Tibial artery (tissue), 4 donors: ENCODE measurements at regions of chr16 and their contacts with region 1.

Region 1: GRCh38 chr16:50024684-50025536 is at the start of gene CNEP1R1:
- DNase-seq: peak; percentile 93 to 97
- H3K4me3 ChIP-seq: peak within 1 kb of the TSS; percentile 88 to 93
- H3K27ac ChIP-seq: peak within 1 kb of the TSS; percentile 81 to 83
- H3K4me1 ChIP-seq: peaks cover 0 to 23% (median 10%) of the 10 kb centered on the region in 4 donors
- H3K27me3 ChIP-seq: no peaks in the 10 kb centered on the region
- CTCF ChIP-seq: peak; percentile 100

Region 2: GRCh38 chr16:50152807-50153452 is 128.0 kb after region 1 on chr16 and contains the start of gene TENT4B:
- intact Hi-C with region 1: loop called (anchors 10 kb)
- DNase-seq: peak; percentile 79 to 91
- H3K4me3 ChIP-seq: peak within 1 kb of the TSS; percentile 74 to 93
- H3K27ac ChIP-seq: peak within 1 kb of the TSS; percentile 90 to 94
- H3K4me1 ChIP-seq: peaks cover 0 to 33% (median 24%) of the 10 kb centered on the region in 4 donors
- H3K27me3 ChIP-seq: no peaks in the 10 kb centered on the region
- CTCF ChIP-seq: peak in 1 of 2 experiments; percentile 7

Region 3: GRCh38 chr16:50210266-50211038 is 185.5 kb after region 1 on chr16:
- intact Hi-C with region 1: loop called (anchors 5 kb)
- DNase-seq: peak; percentile 77 to 85
- H3K4me3 ChIP-seq: no peak overlapping the region
- H3K27ac ChIP-seq: peak overlapping the region; percentile 25 to 42
- H3K4me1 ChIP-seq: peaks cover 0 to 63% (median 43%) of the 10 kb centered on the region in 4 donors
- H3K27me3 ChIP-seq: no peaks in the 10 kb centered on the region
- CTCF ChIP-seq: peak; percentile 61 to 64

Region 4: GRCh38 chr16:50281964-50282538 is 257.1 kb after region 1 on chr16:
- intact Hi-C with region 1: no loop called
- DNase-seq: peak; percentile 78 to 87
- H3K4me3 ChIP-seq: no peak overlapping the region
- H3K27ac ChIP-seq: peak overlapping the region in 1 of 2 donors; percentile 9
- H3K4me1 ChIP-seq: peaks cover 0 to 14% (median 0%) of the 10 kb centered on the region in 4 donors
- H3K27me3 ChIP-seq: no peaks in the 10 kb centered on the region
- CTCF ChIP-seq: no peak

Region 5: DNA sequence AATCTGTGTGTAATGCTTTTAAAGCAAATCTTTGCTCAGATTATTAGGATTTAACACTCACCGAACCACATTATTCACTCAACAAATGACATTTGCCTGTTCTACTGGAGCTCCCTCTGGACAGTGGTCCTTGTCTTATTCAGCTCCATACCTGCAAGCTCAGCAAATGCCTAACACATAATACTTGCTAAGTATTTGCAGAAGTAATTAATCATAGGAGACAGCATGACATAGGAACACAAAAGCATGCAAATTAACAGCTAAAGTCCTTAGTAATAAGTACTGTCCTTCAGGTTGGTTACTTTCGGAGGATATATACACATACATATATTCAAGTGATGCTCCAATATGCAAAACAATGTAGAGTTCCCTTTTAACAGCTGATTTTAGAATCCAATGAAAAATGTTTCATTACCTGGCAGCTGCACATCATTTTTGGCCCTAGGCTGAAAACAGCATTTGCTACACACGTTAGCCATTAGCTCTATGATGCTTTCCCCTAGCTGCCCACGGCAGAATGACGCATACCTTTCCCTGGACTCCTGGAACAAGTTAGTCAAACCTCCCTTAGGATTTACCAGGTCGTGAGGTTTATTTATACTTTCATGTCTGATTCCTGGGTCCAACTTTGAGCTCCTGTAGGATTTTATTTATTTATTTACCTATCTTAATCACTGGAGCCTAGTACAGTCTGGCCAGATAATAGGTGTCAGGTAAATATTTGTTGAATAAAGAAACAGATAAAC is 335.3 kb after region 1 on chr16:
- intact Hi-C with region 1: loop called (anchors 5 kb)
- DNase-seq: peak in 1 of 2 donors; percentile 87
- H3K4me3 ChIP-seq: no peak overlapping the region
- H3K27ac ChIP-seq: peak overlapping the region; percentile 65 to 67
- H3K4me1 ChIP-seq: peaks cover 0 to 61% (median 25%) of the 10 kb centered on the region in 4 donors
- H3K27me3 ChIP-seq: no peaks in the 10 kb centered on the region
- CTCF ChIP-seq: no peak